H1 (cell line): ENCODE measurements at regions of chr18 and their contacts with region 1.

Region 1: DNA sequence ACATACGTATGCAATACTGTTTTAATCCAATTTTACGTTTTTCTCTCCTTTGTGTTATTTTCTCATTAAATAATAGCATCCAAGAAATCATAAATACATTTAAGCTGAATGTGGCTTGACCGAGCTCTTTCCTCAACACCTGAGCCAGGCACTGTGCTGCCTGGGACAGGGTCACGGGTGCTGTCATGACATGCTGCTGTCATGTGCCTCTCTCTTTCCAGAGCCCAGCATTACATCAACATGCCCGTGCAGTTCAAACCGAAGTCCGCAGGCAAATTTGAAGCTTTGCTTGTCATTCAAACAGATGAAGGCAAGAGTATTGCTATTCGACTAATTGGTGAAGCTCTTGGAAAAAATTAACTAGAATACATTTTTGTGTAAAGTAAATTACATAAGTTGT is 94.1 kb upstream of the LDLRAD4 start:
- DNase-seq: no peak
- H3K4me3 ChIP-seq: no peak overlapping the region
- H3K27ac ChIP-seq: no peak overlapping the region
- H3K4me1 ChIP-seq: no peaks in the 10 kb centered on the region; a peak in 1 of 7 replicates
- H3K27me3 ChIP-seq: no peaks in the 10 kb centered on the region
- CTCF ChIP-seq: no peak
- EP300 ChIP-seq: no peak
- POLR2A ChIP-seq: no peak
- RAD21 ChIP-seq: no peak

Region 2: GRCh38 chr18:13112982-13113381 is 11.4 kb before region 1 on chr18:
- CTCF ChIA-PET with region 1: interaction called, 16 read pairs
- POLR2A ChIA-PET with region 1: no interaction called
- DNase-seq: peak; percentile 64 to 65
- H3K4me3 ChIP-seq: no peak overlapping the region
- H3K27ac ChIP-seq: no peak overlapping the region
- H3K4me1 ChIP-seq: no peaks in the 10 kb centered on the region
- H3K27me3 ChIP-seq: no peaks in the 10 kb centered on the region
- CTCF ChIP-seq: peak; percentile 64 to 80 (median 76)
- EP300 ChIP-seq: no peak
- POLR2A ChIP-seq: no peak
- RAD21 ChIP-seq: peak; percentile 76 to 83

Region 3: DNA sequence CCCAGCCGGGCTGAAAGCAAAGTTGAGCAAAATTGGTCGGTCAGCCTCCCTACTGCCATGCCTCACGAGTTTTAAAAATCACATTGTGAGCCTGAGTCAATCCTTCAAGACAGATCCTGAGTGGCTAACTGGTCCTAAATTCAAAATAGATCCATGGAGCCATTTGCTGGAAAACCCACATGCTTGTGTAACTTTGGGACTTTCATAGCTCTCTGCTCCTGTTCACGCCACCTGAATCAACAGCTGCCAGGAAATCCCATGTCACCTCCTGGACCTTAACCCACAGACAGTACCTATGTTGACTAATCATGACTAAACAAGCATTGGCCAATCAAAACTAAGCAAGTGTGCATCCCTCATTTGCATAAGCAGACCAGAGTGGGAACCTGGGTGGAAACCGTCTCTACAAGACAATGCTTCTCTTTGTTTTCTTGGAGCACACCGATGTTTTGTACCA is 51.4 kb after region 1 on chr18:
- CTCF ChIA-PET with region 1: no interaction called
- POLR2A ChIA-PET with region 1: no interaction called
- DNase-seq: no peak
- H3K4me3 ChIP-seq: no peak overlapping the region
- H3K27ac ChIP-seq: no peak overlapping the region
- H3K4me1 ChIP-seq: peaks cover 0 to 3% (median 0%) of the 10 kb centered on the region in 4 experiments; a peak in 1 of 7 replicates
- H3K27me3 ChIP-seq: no peaks in the 10 kb centered on the region
- CTCF ChIP-seq: no peak
- EP300 ChIP-seq: no peak
- POLR2A ChIP-seq: no peak
- RAD21 ChIP-seq: no peak